ENCODE measurements at regions of chr2 and their contacts with region 1.

Region 1: GRCh38 chr2:121596221-121597080 is 52.8 kb downstream of the CLASP1 start:
- DNase-seq: peak; percentile 28
- ATAC-seq: peak; percentile 79 to 85

Region 2: DNA sequence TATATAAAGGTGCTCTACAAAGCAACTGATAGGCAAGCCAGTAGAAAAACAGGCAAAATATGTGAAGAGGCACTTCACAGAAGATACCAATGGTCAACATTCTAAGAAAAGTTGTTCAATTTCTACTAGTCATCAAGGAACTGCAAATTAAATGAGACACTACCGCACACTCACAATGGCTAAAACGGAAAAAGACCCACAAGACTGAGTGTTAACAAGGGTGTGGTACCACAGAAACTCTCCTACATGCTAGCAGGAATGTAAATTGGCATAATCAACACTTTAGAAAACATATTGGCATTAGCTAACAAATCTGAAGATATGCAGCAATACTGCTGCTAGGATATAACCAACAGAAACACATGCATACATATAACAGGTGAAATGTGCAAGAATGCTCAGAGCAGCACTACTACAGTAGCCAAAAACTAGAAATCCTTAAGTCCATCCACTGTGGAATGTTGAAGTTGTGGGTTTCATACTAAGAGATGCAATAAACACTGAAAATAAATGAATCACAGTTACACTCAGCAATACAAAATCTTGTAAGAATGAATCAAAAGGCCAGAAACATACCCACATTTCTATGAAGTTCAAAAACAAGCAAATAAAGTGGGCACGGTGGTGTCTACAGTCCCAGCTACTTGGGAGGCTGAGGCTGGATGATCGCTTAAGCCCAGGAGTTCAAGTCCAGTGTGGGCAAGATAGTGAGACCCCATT is 56.5 kb before region 1 on chr2:
- intact Hi-C with region 1: loop called (anchors 5 to 10 kb)
- DNase-seq: no peak
- ATAC-seq: no peak

Region 3: GRCh38 chr2:121649596-121650314 is 53.3 kb after region 1 on chr2:
- intact Hi-C with region 1: loop called in 1 of 2 experiments (anchors 5 kb)
- DNase-seq: peak; percentile 98
- ATAC-seq: peak; percentile 98 to 99